ENCODE measurements at regions of chr2 and their contacts with region 1.

Region 1: GRCh38 chr2:65309708-65310107 is 82.1 kb downstream of the ACTR2 start:
- DNase-seq: no peak
- H3K4me3 ChIP-seq: no peak overlapping the region
- H3K27ac ChIP-seq: no peak overlapping the region
- H3K4me1 ChIP-seq: peaks cover 8% of the 10 kb centered on the region
- H3K27me3 ChIP-seq: no peaks in the 10 kb centered on the region
- CTCF ChIP-seq: no peak
- POLR2A ChIP-seq: no peak

Region 2: GRCh38 chr2:65350684-65351083 is 41.0 kb after region 1 on chr2:
- CTCF ChIA-PET with region 1: no interaction called
- POLR2A ChIA-PET with region 1: no interaction called
- dilution Hi-C with region 1: no loop called
- intact Hi-C with region 1: loop called (anchors 5 kb)
- DNase-seq: no peak
- H3K4me3 ChIP-seq: no peak overlapping the region
- H3K27ac ChIP-seq: no peak overlapping the region
- H3K4me1 ChIP-seq: peaks cover 9% of the 10 kb centered on the region
- H3K27me3 ChIP-seq: peaks cover 0 to 4% of the 10 kb centered on the region in 2 experiments
- CTCF ChIP-seq: peak; percentile 21 to 26
- POLR2A ChIP-seq: no peak